Lower leg skin (tissue), 4 donors: ENCODE measurements at regions of chr11 and their contacts with region 1.

Region 1: GRCh38 chr11:64846998-64847666 is 2.7 kb upstream of the CDC42BPG start:
- DNase-seq: peak; percentile 88 to 98
- H3K4me3 ChIP-seq: no peak overlapping the region
- CTCF ChIP-seq: peak in 1 of 3 donors; percentile 80
- POLR2A ChIP-seq: no peak

Region 2: DNA sequence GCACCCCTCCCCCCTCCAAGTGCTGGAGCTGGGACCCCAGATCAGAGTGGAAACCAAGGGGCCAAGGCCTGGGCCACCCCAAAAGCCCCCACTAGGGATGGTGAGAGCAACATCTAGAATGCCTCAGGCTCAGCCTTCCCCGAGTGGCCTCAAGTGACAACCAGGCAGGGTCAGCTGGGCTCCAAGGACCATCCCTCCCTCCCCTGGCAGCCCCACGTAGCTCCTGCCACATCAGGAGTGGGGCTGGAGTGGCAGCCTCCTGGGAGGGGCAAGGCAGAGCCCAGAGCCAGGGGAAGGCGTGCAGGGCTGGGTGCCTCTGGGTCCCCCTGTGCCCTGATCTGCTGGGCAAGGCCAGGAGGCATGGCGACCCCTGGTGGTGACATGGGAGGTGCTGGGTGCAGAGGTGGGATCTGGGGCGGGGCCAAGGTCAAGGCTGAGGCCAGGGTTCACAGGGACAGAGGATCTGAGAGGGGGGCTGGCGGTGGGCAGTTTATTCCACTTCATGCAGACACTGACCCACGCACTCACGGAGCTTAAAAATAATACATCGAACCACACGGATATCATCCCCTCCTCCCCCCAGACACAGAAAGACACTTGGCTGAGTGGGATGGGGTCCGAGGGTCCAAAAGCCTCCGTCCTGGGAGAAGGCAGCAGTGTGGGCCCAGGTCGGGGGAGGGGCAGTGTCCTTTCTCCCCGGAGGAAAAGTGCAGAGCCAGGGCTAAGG is 47.1 kb after region 1 on chr11:
- intact Hi-C with region 1: loop called (anchors 5 kb)
- DNase-seq: peak; percentile 73 to 97
- H3K4me3 ChIP-seq: no peak overlapping the region
- CTCF ChIP-seq: peak in 1 of 3 donors; percentile 87
- POLR2A ChIP-seq: no peak

Region 3: GRCh38 chr11:65111744-65112414 is 264.7 kb after region 1 on chr11 and contains the start of gene TM7SF2:
- intact Hi-C with region 1: loop called (anchors 5 kb)
- DNase-seq: peak; percentile 92 to 99
- H3K4me3 ChIP-seq: peak within 1 kb of the TSS; percentile 7
- CTCF ChIP-seq: no peak
- POLR2A ChIP-seq: no peak
- total RNA-seq, gene TM7SF2: 118 to 374 (median 160) TPM

Region 4: DNA sequence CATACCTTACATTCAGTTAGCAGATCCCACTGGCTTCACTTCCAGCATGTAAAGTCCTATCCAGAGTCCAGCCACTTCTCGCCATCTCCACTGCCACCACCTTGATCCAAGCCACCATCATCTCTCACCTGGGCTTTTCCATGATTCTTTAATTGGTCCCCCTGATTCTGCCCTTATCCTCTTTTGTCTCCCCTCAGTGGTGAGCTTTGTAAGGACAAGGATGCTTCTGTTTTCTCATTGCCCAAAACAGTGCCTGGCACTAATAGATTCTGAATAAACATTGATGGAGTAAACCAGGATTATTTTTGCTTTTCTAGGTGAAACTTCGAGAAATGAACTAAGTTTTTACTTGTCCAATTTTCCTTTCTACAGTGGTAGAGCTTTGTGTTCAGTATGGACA is 419.1 kb after region 1 on chr11:
- intact Hi-C with region 1: no loop called
- DNase-seq: no peak
- H3K4me3 ChIP-seq: no peak overlapping the region
- CTCF ChIP-seq: no peak
- POLR2A ChIP-seq: no peak